ENCODE measurements at regions of chr10 and their contacts with region 1.

Region 1: GRCh38 chr10:31318854-31319601 is at the start of gene ZEB1:
- DNase-seq: peak; percentile 79
- H3K4me3 ChIP-seq: peak within 1 kb of the TSS; percentile 88 to 96 (median 94)
- H3K27ac ChIP-seq: peak within 1 kb of the TSS; percentile 96
- H3K4me1 ChIP-seq: peaks cover 64% of the 10 kb centered on the region
- H3K27me3 ChIP-seq: no peaks in the 10 kb centered on the region
- CTCF ChIP-seq: peak; percentile 19 to 55
- POLR2A ChIP-seq: no peak
- total RNA-seq, gene ZEB1: 117 and 130 TPM in 2 replicates

Region 2: DNA sequence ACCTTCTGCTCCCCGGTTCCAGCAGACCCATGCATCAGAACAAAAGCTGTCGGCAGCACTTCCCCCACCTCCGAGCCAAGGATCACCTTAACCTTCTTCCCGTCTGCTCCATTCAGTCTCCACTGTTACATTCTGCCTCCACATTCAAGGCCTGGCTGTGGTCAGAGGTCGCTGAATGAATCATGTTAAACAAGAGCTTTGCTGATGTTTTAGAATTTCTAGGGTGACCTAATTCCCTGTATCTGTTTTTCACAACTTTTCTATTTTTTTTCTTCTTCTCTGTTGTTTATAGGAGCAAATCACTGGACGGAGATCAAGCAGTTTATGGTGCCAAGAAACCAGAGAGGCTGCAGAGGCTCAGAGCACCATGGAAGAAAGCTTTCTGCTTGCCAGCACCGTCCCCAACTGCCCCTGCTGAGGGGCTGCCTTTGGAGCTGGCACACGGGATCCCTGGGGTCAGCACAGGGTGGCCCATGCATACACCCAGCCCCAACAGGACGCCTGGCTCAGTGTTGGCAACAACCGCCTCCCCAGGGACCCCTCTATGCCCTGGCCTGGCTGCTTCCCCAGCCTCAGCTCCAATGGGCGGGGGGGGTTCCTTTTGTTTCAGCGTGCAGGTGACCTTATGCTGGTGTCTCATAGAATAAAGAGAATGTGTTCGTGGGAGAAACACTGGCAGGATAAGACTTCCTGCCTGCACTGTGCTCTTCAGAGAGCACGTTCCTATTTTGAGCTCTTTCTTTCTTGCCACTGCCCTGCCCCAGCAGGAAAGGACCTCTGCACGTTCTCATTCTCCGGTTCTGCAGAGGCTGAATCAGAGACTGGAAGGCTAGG is 506.8 kb before region 1 on chr10:
- CTCF ChIA-PET with region 1: no interaction called
- POLR2A ChIA-PET with region 1: no interaction called
- dilution Hi-C with region 1: no loop called
- intact Hi-C with region 1: loop called (anchors 10 kb)
- DNase-seq: peak; percentile 96
- H3K4me3 ChIP-seq: no peak overlapping the region
- H3K27ac ChIP-seq: peak overlapping the region; percentile 96
- H3K4me1 ChIP-seq: peaks cover 54% of the 10 kb centered on the region
- H3K27me3 ChIP-seq: no peaks in the 10 kb centered on the region
- CTCF ChIP-seq: no peak
- POLR2A ChIP-seq: peak; percentile 29

Region 3: DNA sequence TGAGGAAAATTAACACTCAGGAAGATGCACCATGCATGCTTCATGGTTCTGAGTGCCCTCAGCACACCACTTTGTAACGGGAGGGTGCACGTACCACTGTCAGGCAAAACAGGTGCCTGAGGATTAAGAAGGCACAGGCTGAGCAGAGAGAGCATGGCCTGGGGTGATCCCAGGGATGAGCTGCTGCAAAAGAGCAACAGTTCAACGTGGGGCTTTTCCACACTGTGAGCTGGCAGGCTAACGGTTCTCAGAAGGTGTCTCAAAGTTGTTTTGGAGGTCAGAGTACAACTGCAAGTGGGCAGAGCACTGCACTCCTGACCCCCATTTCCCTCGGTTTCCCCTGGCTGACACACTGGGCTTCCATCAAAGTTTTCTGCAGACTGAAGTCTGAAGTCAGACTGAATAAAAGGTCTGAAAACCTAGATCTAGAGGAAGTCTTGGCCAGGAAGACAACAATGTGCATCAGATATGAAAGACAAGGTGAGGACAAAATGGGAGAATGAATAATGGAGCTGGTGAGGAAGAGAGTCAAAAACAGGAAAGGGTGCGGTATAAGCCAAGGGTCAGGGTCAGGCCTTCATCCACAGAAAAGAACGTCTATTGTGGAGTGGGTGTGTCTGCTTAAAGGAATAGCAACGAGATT is 307.9 kb before region 1 on chr10:
- CTCF ChIA-PET with region 1: no interaction called
- POLR2A ChIA-PET with region 1: no interaction called
- dilution Hi-C with region 1: no loop called
- intact Hi-C with region 1: loop called (anchors 2 kb)
- DNase-seq: peak; percentile 77
- H3K4me3 ChIP-seq: no peak overlapping the region
- H3K27ac ChIP-seq: peak overlapping the region; percentile 83
- H3K4me1 ChIP-seq: peaks cover 56% of the 10 kb centered on the region
- H3K27me3 ChIP-seq: no peaks in the 10 kb centered on the region
- CTCF ChIP-seq: no peak
- POLR2A ChIP-seq: peak; percentile 60

Region 4: GRCh38 chr10:31090894-31091607 is 228.0 kb before region 1 on chr10:
- CTCF ChIA-PET with region 1: no interaction called
- POLR2A ChIA-PET with region 1: no interaction called
- dilution Hi-C with region 1: no loop called
- intact Hi-C with region 1: no loop called
- DNase-seq: no peak
- H3K4me3 ChIP-seq: no peak overlapping the region
- H3K27ac ChIP-seq: no peak overlapping the region
- H3K4me1 ChIP-seq: no peaks in the 10 kb centered on the region
- H3K27me3 ChIP-seq: no peaks in the 10 kb centered on the region
- CTCF ChIP-seq: no peak
- POLR2A ChIP-seq: no peak

Region 5: GRCh38 chr10:31133628-31134302 is 185.3 kb before region 1 on chr10:
- CTCF ChIA-PET with region 1: no interaction called
- POLR2A ChIA-PET with region 1: no interaction called
- dilution Hi-C with region 1: no loop called
- intact Hi-C with region 1: loop called (anchors 2 kb)
- DNase-seq: peak; percentile 58
- H3K4me3 ChIP-seq: peak overlapping the region in 2 of 3 experiments; percentile 3 to 19
- H3K27ac ChIP-seq: peak overlapping the region; percentile 96
- H3K4me1 ChIP-seq: peaks cover 21% of the 10 kb centered on the region
- H3K27me3 ChIP-seq: no peaks in the 10 kb centered on the region
- CTCF ChIP-seq: no peak
- POLR2A ChIP-seq: no peak

Region 6: GRCh38 chr10:31490858-31491504 is 172.0 kb after region 1 on chr10:
- CTCF ChIA-PET with region 1: interaction called, 12 read pairs
- POLR2A ChIA-PET with region 1: no interaction called
- dilution Hi-C with region 1: no loop called
- intact Hi-C with region 1: loop called (anchors 5 kb)
- DNase-seq: peak; percentile 63
- H3K4me3 ChIP-seq: no peak overlapping the region
- H3K27ac ChIP-seq: peak overlapping the region; percentile 7
- H3K4me1 ChIP-seq: peaks cover 13% of the 10 kb centered on the region
- H3K27me3 ChIP-seq: no peaks in the 10 kb centered on the region
- CTCF ChIP-seq: peak; percentile 50 to 53
- POLR2A ChIP-seq: no peak